AG04450 (cell line): ENCODE measurements at regions of chr10 and their contacts with region 1.

Region 1: DNA sequence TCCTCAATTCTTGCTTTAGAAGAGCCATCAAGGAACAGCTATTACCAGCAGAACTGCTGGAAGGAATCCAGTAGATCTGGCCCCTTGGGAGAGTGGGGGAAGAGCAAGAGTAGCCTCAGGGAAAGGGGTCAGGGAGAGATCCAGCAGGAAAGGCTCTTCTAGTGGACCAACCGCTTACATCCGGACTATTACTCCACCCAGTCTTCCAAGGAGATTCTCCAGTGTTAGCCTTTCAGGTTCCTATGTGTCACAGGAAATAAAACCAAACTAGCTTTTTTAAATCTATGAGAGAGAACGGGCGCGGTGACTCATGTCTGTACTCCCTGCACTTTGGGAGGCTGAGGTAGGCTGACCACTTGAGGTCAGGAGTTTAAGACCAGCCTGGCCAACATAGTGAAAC is 34.3 kb downstream of the TET1 start:
- DNase-seq: no peak
- H3K4me3 ChIP-seq: no peak overlapping the region
- H3K27ac ChIP-seq: no peak overlapping the region
- H3K27me3 ChIP-seq: no peaks in the 10 kb centered on the region
- CTCF ChIP-seq: no peak

Region 2: DNA sequence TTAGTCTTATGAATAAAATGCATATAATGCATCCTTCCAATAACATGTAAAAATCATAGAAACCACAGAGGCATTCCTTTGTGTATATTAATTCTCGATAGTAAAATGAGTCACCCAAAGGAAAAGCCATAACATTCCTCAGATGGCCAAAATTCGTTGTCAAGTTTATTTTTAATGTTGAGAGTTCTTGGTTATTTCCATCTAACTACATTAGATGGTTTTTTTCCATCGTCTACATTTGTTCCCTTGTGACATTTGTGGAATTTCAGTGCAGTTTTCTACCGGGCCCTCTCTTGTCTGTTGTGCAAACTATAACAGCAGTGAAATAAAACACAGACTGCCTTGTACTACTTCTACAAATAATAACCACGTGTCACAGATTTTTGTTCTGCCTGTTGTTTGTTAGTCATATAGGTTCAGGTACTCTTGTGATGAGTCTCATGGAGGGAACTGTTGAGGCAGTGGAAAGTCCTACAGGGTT is 71.9 kb after region 1 on chr10:
- CTCF ChIA-PET with region 1: no interaction called
- POLR2A ChIA-PET with region 1: no interaction called
- DNase-seq: peak; percentile 77
- H3K4me3 ChIP-seq: no peak overlapping the region
- H3K27ac ChIP-seq: peak overlapping the region; percentile 89
- H3K27me3 ChIP-seq: no peaks in the 10 kb centered on the region
- CTCF ChIP-seq: no peak

Region 3: DNA sequence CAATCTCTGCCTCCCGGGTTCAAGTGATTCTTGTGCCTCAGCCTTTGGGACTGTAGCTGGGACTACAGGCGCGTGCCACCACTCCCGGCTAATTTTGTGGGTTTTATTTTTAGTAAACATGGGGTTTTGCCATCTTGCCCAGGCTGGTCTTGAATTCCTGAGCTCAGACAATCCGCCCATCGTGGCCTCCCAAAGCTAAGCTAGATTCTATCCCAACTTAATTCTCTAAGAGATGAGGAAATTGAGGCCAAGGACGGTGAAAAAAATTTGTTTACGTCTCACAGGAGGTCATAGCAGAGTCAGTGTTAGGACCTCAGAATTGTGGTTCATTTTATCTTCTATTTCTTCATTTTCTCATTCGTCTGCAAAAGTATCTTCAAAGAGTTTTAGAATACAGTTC is 132.7 kb after region 1 on chr10:
- CTCF ChIA-PET with region 1: no interaction called
- POLR2A ChIA-PET with region 1: interaction called, 12 read pairs
- DNase-seq: no peak
- H3K4me3 ChIP-seq: no peak overlapping the region
- H3K27ac ChIP-seq: no peak overlapping the region
- H3K27me3 ChIP-seq: no peaks in the 10 kb centered on the region
- CTCF ChIP-seq: no peak

Region 4: GRCh38 chr10:68813559-68813958 is 219.2 kb after region 1 on chr10:
- CTCF ChIA-PET with region 1: no interaction called
- POLR2A ChIA-PET with region 1: no interaction called
- DNase-seq: no peak
- H3K4me3 ChIP-seq: no peak overlapping the region
- H3K27ac ChIP-seq: no peak overlapping the region
- H3K27me3 ChIP-seq: no peaks in the 10 kb centered on the region
- CTCF ChIP-seq: no peak